Activated T-helper 2 cell treated with anti-CD3 and anti-CD28 coated beads, Interferon-gamma antibody, Interleukin-2, Interleukin-4, amounts not matched to agents 10 μg/mL and 5 μg/mL and 100 μg/mL, durations not matched to agents 14 hours and 24 hours and 36 hours (primary cell): ENCODE measurements at regions of chr7 and their contacts with region 1.

Region 1: GRCh38 chr7:76166404-76167255 is 35.1 kb upstream of the SRRM3 start:
- DNase-seq: peak; percentile 92
- H3K4me3 Mint-ChIP-seq: peak overlapping the region; percentile 79
- H3K27ac Mint-ChIP-seq: peak overlapping the region; percentile 88
- H3K4me1 Mint-ChIP-seq: peaks cover 4% of the 10 kb centered on the region
- H3K27me3 Mint-ChIP-seq: no peaks in the 10 kb centered on the region

Region 2: GRCh38 chr7:75584354-75584753 is 582.3 kb before region 1 on chr7:
- intact Hi-C with region 1: no loop called
- DNase-seq: no peak
- H3K4me3 Mint-ChIP-seq: no peak overlapping the region
- H3K27ac Mint-ChIP-seq: no peak overlapping the region
- H3K4me1 Mint-ChIP-seq: no peaks in the 10 kb centered on the region
- H3K27me3 Mint-ChIP-seq: no peaks in the 10 kb centered on the region

Region 3: GRCh38 chr7:76047811-76048667 is 118.6 kb before region 1 on chr7 and contains the starts of genes MDH2 and STYXL1:
- intact Hi-C with region 1: loop called (anchors 2 kb)
- DNase-seq: peak; percentile 88
- H3K4me3 Mint-ChIP-seq: peak within 1 kb of the TSS; percentile 99
- H3K27ac Mint-ChIP-seq: peak within 1 kb of the TSS; percentile 97
- H3K4me1 Mint-ChIP-seq: peaks cover 35% of the 10 kb centered on the region
- H3K27me3 Mint-ChIP-seq: no peaks in the 10 kb centered on the region
- total RNA-seq, gene MDH2: 268 and 285 TPM in 2 replicates
- total RNA-seq, gene STYXL1: 27.7 and 36.1 TPM in 2 replicates

Region 4: GRCh38 chr7:76063577-76063976 is 103.1 kb before region 1 on chr7:
- intact Hi-C with region 1: no loop called
- DNase-seq: no peak
- H3K4me3 Mint-ChIP-seq: no peak overlapping the region
- H3K27ac Mint-ChIP-seq: no peak overlapping the region
- H3K4me1 Mint-ChIP-seq: peaks cover 4% of the 10 kb centered on the region
- H3K27me3 Mint-ChIP-seq: no peaks in the 10 kb centered on the region